ENCODE measurements at regions of chr12 and their contacts with region 1.

Region 1: DNA sequence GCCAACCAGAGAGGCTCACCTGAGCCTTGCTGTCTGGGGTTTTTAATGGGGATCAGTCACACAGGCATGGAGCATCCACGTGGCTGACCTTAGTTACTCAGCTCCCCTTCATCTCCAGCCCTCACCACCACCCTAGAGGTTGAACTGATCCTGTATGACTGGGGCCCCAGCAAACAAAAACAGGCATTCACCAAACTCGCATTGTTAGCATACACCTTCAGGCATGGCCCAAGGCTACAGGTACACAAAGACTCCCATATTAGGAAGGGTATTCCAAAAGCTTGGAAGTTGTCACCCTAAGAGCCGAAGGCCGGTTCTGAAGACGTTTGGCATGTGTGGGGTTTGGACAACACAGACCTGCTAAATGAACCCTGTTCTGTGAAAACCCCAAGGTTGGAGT is 10.0 kb downstream of the DNAH10 start:
- DNase-seq: no peak
- H3K4me3 ChIP-seq: no peak overlapping the region
- H3K27ac ChIP-seq: no peak overlapping the region
- H3K4me1 ChIP-seq: no peaks in the 10 kb centered on the region
- H3K27me3 ChIP-seq: no peaks in the 10 kb centered on the region
- CTCF ChIP-seq: no peak

Region 2: GRCh38 chr12:123634142-123634561 is 137.9 kb before region 1 on chr12:
- CTCF ChIA-PET with region 1: no interaction called
- dilution Hi-C with region 1: no loop called
- in situ Hi-C with region 1: no loop called
- intact Hi-C with region 1: no loop called
- DNase-seq: no peak
- H3K4me3 ChIP-seq: peak overlapping the region; percentile 73 to 90 (median 78)
- H3K27ac ChIP-seq: peak overlapping the region; percentile 84
- H3K4me1 ChIP-seq: peaks cover 7% of the 10 kb centered on the region
- H3K27me3 ChIP-seq: no peaks in the 10 kb centered on the region
- CTCF ChIP-seq: no peak

Region 3: DNA sequence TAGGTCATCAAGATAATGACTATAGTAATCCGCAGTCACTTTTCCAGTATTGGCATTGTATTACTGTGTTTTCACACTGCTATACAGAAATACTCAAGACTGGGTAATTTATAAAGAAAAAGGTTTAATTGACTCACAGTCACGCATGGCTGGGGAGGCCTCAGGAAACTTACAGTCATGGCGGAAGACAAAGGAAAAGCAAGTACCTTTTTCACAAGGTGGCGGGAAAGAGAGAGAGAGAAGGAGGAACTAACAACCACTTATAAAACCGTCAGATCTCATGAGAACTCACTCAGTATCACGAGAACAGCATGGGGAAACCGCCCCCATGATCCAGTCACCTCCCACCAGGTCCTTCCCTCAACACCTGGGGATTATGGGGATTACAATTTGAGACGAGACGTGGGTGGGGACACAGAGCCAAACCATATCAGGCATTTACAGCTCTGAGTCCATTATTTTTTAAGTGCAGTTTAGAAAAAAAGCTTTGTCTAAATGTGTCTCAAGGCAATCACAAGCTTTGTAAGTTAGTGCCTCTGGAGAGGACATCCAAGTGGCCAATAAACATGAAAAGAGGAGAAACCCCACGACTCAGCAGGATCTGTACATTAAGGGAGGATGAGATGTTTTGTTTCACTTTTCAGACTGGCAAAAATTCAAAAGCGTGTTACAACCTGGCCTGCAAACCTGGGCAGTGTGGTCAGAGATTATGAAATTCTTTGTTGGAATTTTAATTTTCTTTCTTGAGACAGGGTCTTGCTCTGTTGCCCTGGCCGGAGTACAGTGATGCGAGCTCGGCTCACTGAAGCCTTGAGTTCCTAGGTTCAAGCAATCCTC is 72.1 kb after region 1 on chr12:
- CTCF ChIA-PET with region 1: no interaction called
- dilution Hi-C with region 1: loop called (anchors 10 kb)
- in situ Hi-C with region 1: no loop called
- intact Hi-C with region 1: no loop called
- DNase-seq: peak; percentile 67
- H3K4me3 ChIP-seq: no peak overlapping the region
- H3K27ac ChIP-seq: no peak overlapping the region
- H3K4me1 ChIP-seq: peaks cover 4% of the 10 kb centered on the region
- H3K27me3 ChIP-seq: no peaks in the 10 kb centered on the region
- CTCF ChIP-seq: no peak

Measured in mammary epithelial cell (primary cell).